Right ventricle myocardium inferior (tissue), 1 donor: ENCODE measurements at regions of chr2 and their contacts with region 1.

Region 1: DNA sequence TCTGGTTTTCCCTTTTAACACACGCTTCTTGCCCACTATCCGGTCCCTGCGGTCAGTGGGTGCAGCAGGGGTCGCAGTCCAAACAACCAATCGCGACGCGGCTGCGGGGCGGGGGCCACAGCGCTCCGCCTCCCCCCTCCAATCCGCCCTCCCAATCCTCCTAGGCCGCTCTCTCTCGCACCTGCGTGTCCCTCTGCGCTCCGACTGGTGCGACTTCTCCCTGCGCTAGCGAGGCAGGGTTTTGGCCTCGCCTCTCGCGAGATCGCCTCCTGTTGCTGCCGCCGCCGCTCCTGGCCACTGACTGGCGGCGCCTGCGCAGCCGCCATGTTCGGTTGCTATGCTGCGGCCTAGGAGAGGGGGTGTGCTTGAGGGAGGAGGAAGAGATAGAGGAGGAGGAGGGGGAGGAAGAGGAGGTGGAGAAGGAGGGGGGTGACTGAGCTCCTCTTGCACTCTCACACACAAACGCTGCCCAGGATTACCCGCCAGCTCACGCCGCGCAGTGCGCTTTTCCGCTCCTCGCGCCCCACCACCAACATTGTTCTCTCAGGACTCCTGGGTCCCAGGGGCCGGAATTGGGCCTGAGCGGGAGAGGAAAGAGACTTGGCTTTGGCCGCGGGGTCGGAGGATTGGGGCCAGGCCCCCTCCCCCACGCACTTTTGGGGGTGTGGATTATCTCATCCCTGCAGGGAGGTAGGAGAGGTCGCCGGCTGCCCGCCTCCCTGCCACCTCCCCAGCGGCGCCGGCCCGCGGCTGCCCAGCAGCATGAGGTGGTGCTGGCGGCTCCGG is at the start of gene PTPN4:
- DNase-seq: peak; percentile 99
- ATAC-seq: peak; percentile 98
- total RNA-seq, gene PTPN4: 40.4 TPM

Region 2: DNA sequence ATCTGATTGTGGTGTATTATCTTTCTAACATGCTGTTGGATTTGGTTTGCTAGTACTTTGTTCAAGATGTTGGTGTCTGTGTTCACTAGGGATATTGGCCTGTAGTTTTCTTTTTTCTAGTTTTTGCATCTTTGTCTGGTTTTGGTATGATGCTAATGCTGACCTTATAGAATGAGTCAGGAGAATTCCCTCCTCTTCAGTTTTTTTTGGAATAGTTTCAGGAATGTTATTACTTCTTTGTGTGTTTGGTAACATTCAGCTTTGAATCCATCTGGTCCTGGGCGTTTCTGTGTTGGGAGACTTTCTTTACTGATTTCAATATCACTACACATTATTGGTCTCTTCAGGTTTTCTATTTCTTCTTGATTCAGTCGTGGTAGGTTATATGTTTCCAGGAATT is 129.0 kb after region 1 on chr2:
- intact Hi-C with region 1: no loop called
- DNase-seq: no peak
- ATAC-seq: no peak

Region 3: DNA sequence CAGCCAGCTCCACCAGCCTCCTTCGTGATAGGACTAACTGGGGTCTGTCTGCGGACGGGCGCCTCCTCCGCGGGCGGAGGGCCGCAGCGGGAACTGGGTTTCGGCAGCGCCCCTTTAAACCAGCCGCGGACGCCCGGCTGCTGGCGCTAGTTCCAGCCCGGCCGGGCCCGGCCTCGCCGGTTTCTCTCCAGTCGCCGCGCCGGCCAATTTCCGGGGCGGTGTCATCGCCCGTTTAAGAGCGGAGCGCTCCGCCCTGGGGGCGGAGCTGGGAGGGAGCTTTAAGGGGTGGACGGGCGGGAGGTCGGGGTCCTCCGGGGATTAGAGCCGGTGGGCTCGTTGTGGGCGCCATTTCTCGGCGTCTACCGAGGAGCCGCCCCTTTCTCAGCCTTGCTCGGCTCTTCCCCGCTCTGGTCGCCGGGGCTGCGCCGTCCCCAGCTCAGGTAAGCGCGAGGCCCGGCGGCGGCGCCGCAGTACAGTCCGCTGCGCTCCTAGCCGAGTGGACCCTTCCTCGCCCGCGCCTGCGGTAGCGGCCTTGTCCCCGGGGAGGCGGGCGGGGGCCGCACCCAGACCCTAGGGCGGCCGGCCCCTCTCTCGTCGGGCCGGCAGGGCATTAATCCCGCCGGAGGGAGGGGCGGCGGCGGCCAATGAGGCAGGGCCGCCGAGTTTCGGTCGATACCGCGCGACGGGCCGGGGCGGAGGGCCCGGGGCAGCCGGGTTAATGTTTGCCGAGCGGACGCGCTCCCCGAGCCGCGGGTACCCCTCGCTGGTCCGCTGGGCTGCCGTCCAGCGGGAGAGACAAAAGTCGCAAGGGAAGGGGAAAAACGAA is 253.3 kb after region 1 on chr2 and contains the start of gene EPB41L5:
- intact Hi-C with region 1: loop called (anchors 5 kb)
- DNase-seq: peak; percentile 98
- ATAC-seq: peak; percentile 99
- total RNA-seq, gene EPB41L5: 8.2 TPM